Esophagus squamous epithelium (tissue), 5 donors: ENCODE measurements at regions of chr14 and their contacts with region 1.

Region 1: GRCh38 chr14:71309753-71310152 is 402.5 kb downstream of the PCNX1 start:
- DNase-seq: no peak
- H3K4me3 ChIP-seq: no peak overlapping the region
- H3K27ac ChIP-seq: no peak overlapping the region
- H3K4me1 ChIP-seq: no peaks in the 10 kb centered on the region
- H3K27me3 ChIP-seq: no peaks in the 10 kb centered on the region
- CTCF ChIP-seq: peak in 1 of 6 experiments; percentile 23
- POLR2A ChIP-seq: no peak

Region 2: DNA sequence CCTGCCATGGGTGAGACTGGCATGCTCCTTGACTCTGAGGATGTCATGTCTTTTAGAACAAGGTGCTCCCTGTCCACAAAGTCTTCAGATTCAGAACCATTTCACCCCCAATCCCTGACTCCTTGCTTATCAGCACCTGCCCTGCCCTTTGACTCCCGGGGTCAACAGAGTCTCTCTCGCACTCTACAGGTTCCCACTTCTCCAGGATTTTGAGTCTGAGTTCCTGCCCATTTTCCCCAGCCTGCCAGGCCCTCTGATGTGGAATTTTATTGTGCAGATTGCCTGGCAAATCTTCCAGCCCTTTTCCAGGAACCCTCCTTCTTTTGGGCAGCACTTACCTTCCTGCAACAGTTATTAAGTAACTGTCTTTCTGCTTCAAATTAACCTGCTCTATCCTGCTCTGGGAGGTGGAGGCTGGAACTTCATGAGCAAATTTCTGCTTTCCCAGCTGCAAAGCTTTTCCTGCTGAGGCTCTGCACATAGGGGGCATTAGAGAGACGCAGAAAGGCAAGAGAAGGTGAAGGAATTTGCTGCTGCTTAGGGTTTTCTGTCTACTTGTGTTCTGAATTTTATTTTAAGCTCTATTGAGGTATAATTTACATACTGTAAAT is 143.5 kb before region 1 on chr14:
- intact Hi-C with region 1: loop called (anchors 10 kb)
- DNase-seq: no peak
- H3K4me3 ChIP-seq: no peak overlapping the region
- H3K27ac ChIP-seq: no peak overlapping the region
- H3K4me1 ChIP-seq: peaks cover 0 to 4% (median 0%) of the 10 kb centered on the region in 3 donors
- H3K27me3 ChIP-seq: no peaks in the 10 kb centered on the region
- CTCF ChIP-seq: peak in 3 of 6 experiments; percentile 24 to 29 (median 29)
- POLR2A ChIP-seq: no peak

Region 3: GRCh38 chr14:71430321-71431208 is 120.8 kb after region 1 on chr14:
- intact Hi-C with region 1: no loop called
- DNase-seq: no peak
- H3K4me3 ChIP-seq: no peak overlapping the region
- H3K27ac ChIP-seq: no peak overlapping the region
- H3K4me1 ChIP-seq: no peaks in the 10 kb centered on the region
- H3K27me3 ChIP-seq: no peaks in the 10 kb centered on the region
- CTCF ChIP-seq: no peak
- POLR2A ChIP-seq: no peak

Region 4: DNA sequence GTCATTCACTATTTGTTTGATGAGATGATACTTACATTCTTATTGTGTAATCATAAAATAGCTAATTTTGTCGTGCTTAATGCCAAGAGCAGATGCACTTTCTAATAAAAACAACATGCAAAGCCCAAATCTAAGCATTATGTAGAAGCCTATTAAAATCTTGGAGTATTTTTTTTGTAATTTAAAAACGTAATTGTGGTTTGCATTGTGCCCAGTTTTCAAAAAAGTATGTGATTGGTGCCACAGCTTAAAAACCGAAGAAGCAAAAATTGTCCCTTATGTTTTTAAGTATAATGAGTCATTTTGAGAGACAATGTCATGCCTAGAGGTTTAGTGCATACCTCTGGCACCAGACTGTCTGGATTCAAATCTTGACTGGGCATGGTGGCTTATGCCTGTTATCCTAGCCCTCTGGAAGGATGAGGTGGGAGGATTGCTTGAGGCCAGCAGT is 157.6 kb after region 1 on chr14:
- intact Hi-C with region 1: no loop called
- DNase-seq: no peak
- H3K4me3 ChIP-seq: no peak overlapping the region
- H3K27ac ChIP-seq: no peak overlapping the region
- H3K4me1 ChIP-seq: peaks cover 0 to 9% (median 0%) of the 10 kb centered on the region in 3 donors
- H3K27me3 ChIP-seq: no peaks in the 10 kb centered on the region
- CTCF ChIP-seq: no peak
- POLR2A ChIP-seq: no peak